Spleen (tissue), 13 donors: ENCODE measurements at regions of chr17 and their contacts with region 1.

Region 1: DNA sequence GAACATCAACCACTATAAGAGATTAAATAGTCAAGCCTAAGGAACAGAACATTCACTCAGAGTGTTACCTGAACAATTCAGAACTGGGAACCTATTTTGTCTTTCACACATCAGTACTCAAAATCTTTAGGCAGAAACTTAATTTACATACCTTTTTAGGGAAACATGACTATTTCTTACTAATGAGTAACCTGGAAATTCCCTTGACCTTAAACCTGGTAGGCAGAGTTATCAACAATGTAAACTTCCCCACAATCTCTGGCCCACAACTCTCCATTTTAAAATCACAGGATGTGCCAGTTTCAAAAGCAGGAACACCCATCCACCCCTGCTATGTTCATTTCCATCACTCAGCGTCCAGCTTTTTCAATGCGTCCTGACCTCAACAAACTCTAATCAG is 132.9 kb upstream of the ANKFN1 start:
- DNase-seq: no peak
- H3K4me3 ChIP-seq: no peak overlapping the region
- H3K27ac ChIP-seq: no peak overlapping the region
- H3K4me1 ChIP-seq: no peaks in the 10 kb centered on the region
- H3K27me3 ChIP-seq: peaks cover 0 to 7% (median 0%) of the 10 kb centered on the region in 7 donors
- CTCF ChIP-seq: no peak
- POLR2A ChIP-seq: no peak

Region 2: GRCh38 chr17:56074361-56074890 is 54.1 kb after region 1 on chr17:
- intact Hi-C with region 1: loop called (anchors 10 kb)
- DNase-seq: no peak
- H3K4me3 ChIP-seq: no peak overlapping the region
- H3K27ac ChIP-seq: no peak overlapping the region
- H3K4me1 ChIP-seq: no peaks in the 10 kb centered on the region
- H3K27me3 ChIP-seq: no peaks in the 10 kb centered on the region
- CTCF ChIP-seq: no peak
- POLR2A ChIP-seq: no peak